Activated B cell treated with CpG ODN at 0.5 μM for 24 hours (primary cell): ENCODE measurements at regions of chr1 and their contacts with region 1.

Region 1: DNA sequence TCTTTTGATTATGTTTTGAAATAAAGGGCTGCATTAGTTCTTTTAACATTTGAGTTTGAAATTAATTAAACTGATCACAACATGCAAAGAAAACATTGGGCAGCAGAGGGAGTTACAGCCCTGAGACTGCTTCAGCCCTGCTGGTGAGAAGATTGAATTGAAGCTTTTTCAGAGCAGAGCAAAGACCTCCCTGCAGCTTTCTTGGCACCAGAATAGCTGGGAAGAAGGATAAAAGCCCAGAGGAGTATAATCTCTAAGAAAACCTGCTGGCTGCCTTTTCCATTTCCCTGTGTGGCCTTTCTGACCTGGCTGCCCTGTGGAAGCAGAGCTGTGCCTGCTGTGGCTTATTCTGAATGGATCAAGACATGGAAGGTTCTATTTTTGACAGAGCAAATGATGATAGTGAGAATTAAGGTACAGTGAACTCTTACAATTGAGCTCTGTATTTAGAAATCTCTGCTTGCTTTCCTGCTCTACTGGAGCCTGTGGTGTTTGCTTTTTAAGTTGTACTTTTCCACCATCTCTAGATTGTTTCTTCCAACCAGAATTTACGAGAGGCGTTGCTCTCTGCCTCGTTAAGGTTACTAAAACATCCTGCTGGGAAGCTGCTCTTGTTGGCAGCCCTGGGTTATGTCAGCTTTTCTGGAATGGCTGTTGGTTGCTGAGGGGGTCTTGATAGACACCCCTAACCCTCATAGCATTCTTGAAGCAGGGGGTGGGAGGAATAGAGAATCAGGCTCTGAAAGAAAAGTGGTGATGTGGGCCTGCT is 9.9 kb downstream of the SNRPE start:
- DNase-seq: no peak
- ATAC-seq: peak; percentile 45
- H3K4me3 Mint-ChIP-seq: no peak overlapping the region
- H3K27ac Mint-ChIP-seq: no peak overlapping the region
- H3K4me1 Mint-ChIP-seq: no peaks in the 10 kb centered on the region
- H3K27me3 Mint-ChIP-seq: no peaks in the 10 kb centered on the region
- CTCF ChIP-seq: no peak

Region 2: DNA sequence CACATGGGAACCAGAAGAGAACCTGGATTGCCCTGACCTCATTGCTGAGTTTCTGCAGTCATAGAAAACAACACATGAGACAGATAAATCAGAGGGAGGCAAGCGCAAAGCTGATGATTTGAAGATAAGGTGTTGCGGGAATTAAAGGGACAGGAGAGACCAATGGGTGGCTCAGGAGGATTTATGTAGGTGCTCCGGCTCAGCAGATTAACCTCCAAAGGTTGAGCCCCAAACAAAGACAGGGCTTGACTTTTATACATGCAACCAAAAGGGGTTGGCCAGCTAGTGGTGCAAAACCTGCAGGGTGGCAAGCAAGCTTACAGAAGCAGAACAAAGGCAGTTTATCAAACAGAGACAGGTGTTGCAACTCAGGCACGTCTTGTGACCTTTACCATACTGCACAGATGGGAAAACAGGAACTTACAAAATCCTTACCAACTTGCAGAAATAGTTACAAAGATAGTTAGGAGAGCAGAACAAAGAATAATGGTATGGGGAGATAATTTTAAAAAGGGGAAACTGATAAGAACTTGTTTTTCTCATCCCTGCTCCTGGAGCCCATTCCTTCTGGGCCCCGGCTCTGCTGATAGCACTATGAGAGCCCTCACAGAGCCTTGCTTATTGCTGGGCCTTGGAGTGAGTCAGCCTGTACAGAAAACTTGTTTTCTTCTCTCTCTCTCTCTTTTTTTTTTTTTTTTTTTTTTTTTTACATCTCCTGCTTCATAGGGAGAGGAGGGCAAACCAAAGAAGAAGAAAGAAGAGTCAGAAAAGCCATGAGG is 83.7 kb after region 1 on chr1:
- CTCF ChIA-PET with region 1: no interaction called
- POLR2A ChIA-PET with region 1: no interaction called
- intact Hi-C with region 1: no loop called
- DNase-seq: no peak
- ATAC-seq: no peak
- H3K4me3 Mint-ChIP-seq: no peak overlapping the region
- H3K27ac Mint-ChIP-seq: no peak overlapping the region
- H3K4me1 Mint-ChIP-seq: no peaks in the 10 kb centered on the region
- H3K27me3 Mint-ChIP-seq: peaks cover 13% of the 10 kb centered on the region
- CTCF ChIP-seq: no peak

Region 3: GRCh38 chr1:204025917-204026707 is 154.8 kb after region 1 on chr1:
- CTCF ChIA-PET with region 1: no interaction called
- POLR2A ChIA-PET with region 1: interaction called, 11 read pairs
- intact Hi-C with region 1: no loop called
- DNase-seq: no peak
- ATAC-seq: no peak
- H3K4me3 Mint-ChIP-seq: no peak overlapping the region
- H3K27ac Mint-ChIP-seq: no peak overlapping the region
- H3K4me1 Mint-ChIP-seq: no peaks in the 10 kb centered on the region
- H3K27me3 Mint-ChIP-seq: peaks cover 21% of the 10 kb centered on the region
- CTCF ChIP-seq: no peak

Region 4: DNA sequence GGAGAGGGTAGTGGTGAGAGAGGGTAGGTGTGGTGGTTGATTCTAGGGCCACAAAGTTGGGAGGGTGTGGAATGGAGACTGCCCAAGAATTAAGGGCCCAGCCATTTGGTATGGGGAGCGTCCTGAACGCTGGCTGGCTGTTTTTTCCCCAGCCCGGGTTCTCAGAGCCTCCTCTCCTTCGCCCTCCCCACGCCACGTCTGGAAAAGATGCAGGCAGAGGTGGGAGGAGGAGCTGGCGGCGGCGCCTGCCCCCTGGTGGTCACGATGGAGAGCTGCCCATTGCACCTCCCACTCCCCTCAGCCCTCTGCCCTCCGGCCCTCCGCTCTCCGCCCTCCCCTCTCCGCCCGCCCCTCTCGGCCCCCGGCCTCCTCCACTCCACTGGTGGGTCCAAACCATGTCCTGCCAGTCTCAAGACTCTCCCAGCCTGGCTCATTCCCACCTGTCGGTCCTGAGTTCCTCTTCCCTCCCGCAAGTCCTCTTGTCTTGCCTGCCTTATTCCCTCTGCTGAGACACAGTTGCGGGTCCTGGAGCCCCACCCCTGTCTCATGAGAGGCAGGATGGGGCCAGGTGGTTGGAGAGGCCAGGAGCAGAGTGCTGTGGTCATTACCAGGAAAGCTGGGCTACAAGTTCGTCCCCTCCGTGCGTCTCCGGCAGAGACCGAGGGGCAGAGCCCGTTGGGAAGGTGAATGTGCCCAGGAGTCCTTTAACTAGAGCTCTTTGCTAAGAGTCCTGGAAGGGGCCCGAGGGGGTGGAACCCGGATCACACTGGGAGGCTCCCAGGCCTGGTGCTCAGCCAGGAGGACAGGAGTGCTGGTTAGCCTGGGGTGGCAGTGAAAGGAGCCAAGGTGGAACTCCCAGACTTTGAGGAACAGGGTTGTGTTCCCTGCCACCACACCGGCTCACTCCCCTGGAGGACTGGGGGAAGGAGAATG is 257.9 kb after region 1 on chr1:
- CTCF ChIA-PET with region 1: interaction called, 7 read pairs
- POLR2A ChIA-PET with region 1: no interaction called
- intact Hi-C with region 1: loop called (anchors 1 kb)
- DNase-seq: peak; percentile 41
- ATAC-seq: peak; percentile 89
- H3K4me3 Mint-ChIP-seq: no peak overlapping the region
- H3K27ac Mint-ChIP-seq: no peak overlapping the region
- H3K4me1 Mint-ChIP-seq: peaks cover 8% of the 10 kb centered on the region
- H3K27me3 Mint-ChIP-seq: peaks cover 7% of the 10 kb centered on the region
- CTCF ChIP-seq: no peak